ENCODE measurements at regions of chr7 and their contacts with region 1.

Region 1: GRCh38 chr7:112414855-112415490 is 35.3 kb upstream of the IFRD1 start:
- DNase-seq: no peak
- ATAC-seq: peak in 1 of 2 donors; percentile 43
- H3K4me3 ChIP-seq: no peak overlapping the region
- H3K27ac ChIP-seq: no peak overlapping the region
- H3K4me1 ChIP-seq: no peaks in the 10 kb centered on the region
- H3K27me3 ChIP-seq: no peaks in the 10 kb centered on the region

Region 2: GRCh38 chr7:111301891-111302290 is 1113.1 kb before region 1 on chr7:
- intact Hi-C with region 1: no loop called
- DNase-seq: no peak
- ATAC-seq: no peak
- H3K4me3 ChIP-seq: no peak overlapping the region
- H3K27ac ChIP-seq: no peak overlapping the region
- H3K4me1 ChIP-seq: no peaks in the 10 kb centered on the region
- H3K27me3 ChIP-seq: no peaks in the 10 kb centered on the region

Region 3: DNA sequence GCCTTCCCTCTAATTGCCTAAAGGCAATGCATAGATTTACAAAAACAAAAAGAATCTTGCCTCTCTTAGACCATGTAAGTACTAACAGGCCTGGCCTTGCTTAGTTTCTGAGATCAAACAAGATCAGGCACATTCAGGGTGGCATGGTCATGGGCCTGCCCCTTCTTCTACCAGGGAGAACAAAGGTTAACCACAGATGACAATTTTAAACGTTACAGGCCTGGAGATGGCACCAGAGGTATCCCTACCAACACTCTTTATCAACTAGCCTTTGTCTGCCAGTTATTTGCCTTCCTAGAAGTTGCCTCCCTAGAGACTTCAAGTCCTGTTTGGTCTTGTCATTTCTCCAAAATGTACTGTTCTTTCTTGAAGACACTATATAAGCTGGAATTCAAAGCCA is 461.4 kb before region 1 on chr7:
- intact Hi-C with region 1: loop called in 2 of 4 experiments (anchors 10 kb)
- DNase-seq: no peak
- ATAC-seq: peak; percentile 60 to 78
- H3K4me3 ChIP-seq: no peak overlapping the region
- H3K27ac ChIP-seq: no peak overlapping the region
- H3K4me1 ChIP-seq: peaks cover 3% of the 10 kb centered on the region
- H3K27me3 ChIP-seq: no peaks in the 10 kb centered on the region

Region 4: GRCh38 chr7:112495810-112496462 is 81.0 kb after region 1 on chr7:
- intact Hi-C with region 1: loop called in 1 of 4 experiments (anchors 10 kb)
- DNase-seq: peak in 2 of 3 donors; percentile 41 to 58
- ATAC-seq: peak; percentile 83 to 89
- H3K4me3 ChIP-seq: no peak overlapping the region
- H3K27ac ChIP-seq: no peak overlapping the region
- H3K4me1 ChIP-seq: no peaks in the 10 kb centered on the region
- H3K27me3 ChIP-seq: no peaks in the 10 kb centered on the region